ENCODE measurements at regions of chr3 and their contacts with region 1.

Region 1: DNA sequence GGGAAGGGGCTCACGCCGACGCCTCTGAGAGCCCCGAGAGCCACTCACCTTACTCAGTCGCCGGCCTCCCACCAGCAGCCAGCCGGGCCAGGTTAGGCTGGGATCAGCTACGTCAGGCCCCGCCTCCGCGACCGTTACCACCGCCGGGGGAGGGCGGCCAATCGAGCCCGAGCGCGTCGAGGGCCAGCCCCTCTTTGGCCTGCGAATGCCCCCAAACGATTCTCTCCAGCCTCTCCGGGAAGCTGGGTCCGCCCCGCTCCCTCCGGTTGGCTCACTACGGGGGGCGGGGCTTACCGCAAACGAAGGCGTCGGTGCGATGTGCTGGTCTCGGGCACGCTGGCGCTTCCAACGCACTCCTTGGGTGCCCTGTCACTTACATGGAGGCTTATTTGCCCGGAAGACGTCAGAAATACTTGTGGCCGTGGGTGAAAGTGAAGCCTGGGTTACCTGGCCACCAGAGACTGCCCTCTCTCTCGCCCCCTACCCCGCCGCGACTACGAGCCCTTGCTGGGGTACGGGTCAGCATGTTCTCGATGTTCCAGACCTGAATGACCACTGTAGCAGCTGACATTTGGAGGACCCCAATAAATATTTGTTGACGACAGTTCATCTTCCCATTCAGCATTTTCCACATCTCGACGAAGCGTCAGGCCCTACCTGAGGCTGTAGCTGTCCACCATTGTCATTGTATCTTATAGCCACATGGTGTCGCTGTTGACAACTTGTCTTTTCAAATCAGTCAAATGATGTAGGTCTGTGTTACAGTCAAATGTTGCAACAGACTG is at the start of gene CEP70:
- DNase-seq: peak; percentile 77
- ATAC-seq: peak; percentile 94
- H3K4me3 Mint-ChIP-seq: peak within 1 kb of the TSS; percentile 90
- H3K27ac Mint-ChIP-seq: peak within 1 kb of the TSS; percentile 86
- H3K4me1 Mint-ChIP-seq: peaks cover 10% of the 10 kb centered on the region
- H3K27me3 Mint-ChIP-seq: no peaks in the 10 kb centered on the region
- CTCF ChIP-seq: peak; percentile 32
- total RNA-seq, gene CEP70: 5.9 and 11.0 TPM in 2 replicates

Region 2: DNA sequence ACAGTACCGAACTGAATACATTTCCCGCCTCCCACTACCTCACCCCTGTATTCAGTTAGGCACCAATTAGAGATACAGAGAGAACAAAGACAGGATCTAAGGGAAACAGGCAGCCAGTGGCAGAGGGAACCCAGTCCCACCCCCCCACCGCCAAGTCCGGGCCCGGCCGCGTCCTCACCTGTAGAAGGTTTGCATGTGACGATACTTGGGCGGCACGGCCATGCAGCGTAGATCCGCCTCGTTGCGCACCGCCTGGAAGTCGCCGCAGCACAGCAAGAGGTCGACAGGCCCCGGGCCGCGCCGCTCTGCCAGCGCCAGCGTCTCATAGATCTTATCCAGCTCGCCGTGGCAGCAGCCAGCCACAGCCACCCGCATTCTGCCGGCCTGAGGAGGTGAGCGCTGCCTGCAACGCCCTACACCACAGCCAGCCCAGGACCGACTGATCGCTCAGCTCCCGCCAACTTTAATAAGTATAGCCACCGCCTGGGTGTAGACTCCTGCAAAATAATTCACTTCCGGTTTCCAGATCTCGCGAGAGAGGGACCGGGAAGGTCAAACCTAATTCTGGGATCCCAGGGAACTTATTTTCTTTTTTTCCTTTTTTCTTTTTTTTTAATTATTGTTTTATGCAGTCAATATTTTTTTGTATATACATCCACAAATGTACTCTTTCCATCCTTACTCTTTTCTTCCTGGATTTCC is 419.8 kb before region 1 on chr3 and contains the start of gene DBR1:
- CTCF ChIA-PET with region 1: no interaction called
- POLR2A ChIA-PET with region 1: no interaction called
- intact Hi-C with region 1: loop called (anchors 2 kb)
- DNase-seq: peak; percentile 64
- ATAC-seq: peak; percentile 92
- H3K4me3 Mint-ChIP-seq: peak within 1 kb of the TSS; percentile 99
- H3K27ac Mint-ChIP-seq: peak within 1 kb of the TSS; percentile 98
- H3K4me1 Mint-ChIP-seq: peaks cover 29% of the 10 kb centered on the region
- H3K27me3 Mint-ChIP-seq: no peaks in the 10 kb centered on the region
- CTCF ChIP-seq: no peak
- total RNA-seq, gene DBR1: 19.6 and 19.9 TPM in 2 replicates

Region 3: GRCh38 chr3:138578141-138578540 is 16.2 kb before region 1 on chr3:
- CTCF ChIA-PET with region 1: interaction called, 4 read pairs
- POLR2A ChIA-PET with region 1: interaction called, 9 read pairs
- intact Hi-C with region 1: loop called (anchors 1 kb)
- DNase-seq: no peak
- ATAC-seq: peak; percentile 87
- H3K4me3 Mint-ChIP-seq: peak overlapping the region; percentile 37
- H3K27ac Mint-ChIP-seq: no peak overlapping the region
- H3K4me1 Mint-ChIP-seq: peaks cover 23% of the 10 kb centered on the region
- H3K27me3 Mint-ChIP-seq: peaks cover 5% of the 10 kb centered on the region
- CTCF ChIP-seq: no peak

Region 4: GRCh38 chr3:138686771-138687221 is 92.5 kb after region 1 on chr3:
- CTCF ChIA-PET with region 1: interaction called, 4 read pairs
- POLR2A ChIA-PET with region 1: interaction called, 8 read pairs
- intact Hi-C with region 1: loop called (anchors 2 kb)
- DNase-seq: no peak
- ATAC-seq: peak; percentile 77
- H3K4me3 Mint-ChIP-seq: peak overlapping the region; percentile 44
- H3K27ac Mint-ChIP-seq: peak overlapping the region; percentile 92
- H3K4me1 Mint-ChIP-seq: peaks cover 38% of the 10 kb centered on the region
- H3K27me3 Mint-ChIP-seq: no peaks in the 10 kb centered on the region
- CTCF ChIP-seq: no peak

Region 5: GRCh38 chr3:138890555-138891187 is 296.3 kb after region 1 on chr3:
- CTCF ChIA-PET with region 1: no interaction called
- POLR2A ChIA-PET with region 1: no interaction called
- intact Hi-C with region 1: loop called (anchors 1 kb)
- DNase-seq: no peak
- ATAC-seq: peak; percentile 82
- H3K4me3 Mint-ChIP-seq: peak overlapping the region; percentile 13
- H3K27ac Mint-ChIP-seq: peak overlapping the region; percentile 66
- H3K4me1 Mint-ChIP-seq: peaks cover 12% of the 10 kb centered on the region
- H3K27me3 Mint-ChIP-seq: no peaks in the 10 kb centered on the region
- CTCF ChIP-seq: no peak

Region 6: GRCh38 chr3:138923531-138923994 is 329.2 kb after region 1 on chr3:
- CTCF ChIA-PET with region 1: interaction called, 216 read pairs
- POLR2A ChIA-PET with region 1: interaction called, 3 read pairs
- intact Hi-C with region 1: loop called (anchors 1 kb)
- DNase-seq: peak; percentile 71
- ATAC-seq: peak; percentile 92
- H3K4me3 Mint-ChIP-seq: no peak overlapping the region
- H3K27ac Mint-ChIP-seq: no peak overlapping the region
- H3K4me1 Mint-ChIP-seq: no peaks in the 10 kb centered on the region
- H3K27me3 Mint-ChIP-seq: peaks cover 28% of the 10 kb centered on the region
- CTCF ChIP-seq: peak; percentile 86

Region 7: GRCh38 chr3:139389458-139390209 is 795.3 kb after region 1 on chr3 and contains the start of gene COPB2:
- CTCF ChIA-PET with region 1: no interaction called
- POLR2A ChIA-PET with region 1: interaction called, 3 read pairs
- intact Hi-C with region 1: loop called (anchors 5 kb)
- DNase-seq: peak; percentile 99
- ATAC-seq: peak; percentile 96
- H3K4me3 Mint-ChIP-seq: peak within 1 kb of the TSS; percentile 91
- H3K27ac Mint-ChIP-seq: peak within 1 kb of the TSS; percentile 94
- H3K4me1 Mint-ChIP-seq: peaks cover 45% of the 10 kb centered on the region
- H3K27me3 Mint-ChIP-seq: no peaks in the 10 kb centered on the region
- CTCF ChIP-seq: no peak
- total RNA-seq, gene COPB2: 87.0 and 91.4 TPM in 2 replicates

Measured in activated B cell treated with CpG ODN at 0.5 μM for 24 hours (primary cell).